H1 (cell line): ENCODE measurements at regions of chr2 and their contacts with region 1.

Region 1: GRCh38 chr2:110853507-110853906 is 121.1 kb downstream of the ACOXL start:
- DNase-seq: no peak
- H3K4me3 ChIP-seq: no peak overlapping the region
- H3K27ac ChIP-seq: no peak overlapping the region
- H3K4me1 ChIP-seq: peaks cover 2 to 13% (median 6%) of the 10 kb centered on the region in 4 experiments; a peak in 5 of 7 replicates
- H3K27me3 ChIP-seq: no peaks in the 10 kb centered on the region
- CTCF ChIP-seq: peak; percentile 55 to 81 (median 65)
- EP300 ChIP-seq: no peak
- POLR2A ChIP-seq: no peak
- RAD21 ChIP-seq: peak; percentile 26 to 47

Region 2: GRCh38 chr2:110788976-110789375 is 64.5 kb before region 1 on chr2:
- CTCF ChIA-PET with region 1: interaction called, 10 read pairs
- POLR2A ChIA-PET with region 1: interaction called, 3 read pairs
- DNase-seq: peak in 1 of 2 experiments; percentile 14
- H3K4me3 ChIP-seq: no peak overlapping the region
- H3K27ac ChIP-seq: no peak overlapping the region
- H3K4me1 ChIP-seq: no peaks in the 10 kb centered on the region
- H3K27me3 ChIP-seq: no peaks in the 10 kb centered on the region
- CTCF ChIP-seq: no peak
- EP300 ChIP-seq: no peak
- POLR2A ChIP-seq: no peak
- RAD21 ChIP-seq: no peak

Region 3: DNA sequence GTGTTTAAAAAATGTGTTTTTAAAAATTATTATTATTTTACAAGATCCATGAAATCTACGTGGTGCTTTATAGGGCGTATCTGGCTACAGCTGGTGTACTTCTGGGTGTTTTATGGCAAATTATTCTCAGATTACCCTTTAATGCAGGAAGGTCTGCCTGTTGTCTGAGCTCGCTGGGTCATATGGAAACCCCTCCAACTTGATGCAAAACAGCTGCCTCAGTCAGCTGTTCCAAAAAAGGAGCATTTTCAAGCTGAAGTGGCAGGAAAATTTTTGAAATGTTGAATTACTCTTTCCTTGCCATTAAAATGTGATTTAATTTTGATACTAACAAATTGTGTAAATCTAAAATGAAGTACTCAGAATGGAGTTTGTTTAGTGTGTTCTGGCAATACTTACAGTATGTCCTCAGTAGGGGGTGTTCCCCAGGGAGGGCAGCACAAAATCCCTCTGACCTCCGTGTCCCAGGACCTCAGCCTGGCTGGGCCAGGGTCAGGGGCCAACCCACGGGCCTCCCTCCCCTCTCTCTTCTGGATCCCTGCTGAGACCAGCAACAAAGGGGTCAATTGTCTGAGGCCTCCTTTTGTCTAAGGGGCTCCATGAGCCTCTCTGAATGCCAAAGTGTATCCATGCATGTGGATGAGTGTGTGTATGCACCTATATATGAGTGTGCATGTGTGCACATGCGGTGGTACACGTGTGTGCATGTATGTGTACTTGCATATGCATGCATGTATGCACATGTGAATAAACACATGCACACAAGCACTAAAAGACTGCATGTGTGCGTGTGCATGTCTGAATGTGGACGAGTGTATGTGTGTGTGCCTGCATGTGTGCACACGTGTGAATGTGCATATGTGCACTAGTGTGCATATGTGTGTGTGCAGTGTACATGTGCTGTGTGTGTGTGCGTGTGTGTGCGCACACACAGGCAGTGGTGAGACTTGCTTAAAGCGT is 15.8 kb before region 1 on chr2:
- CTCF ChIA-PET with region 1: interaction called, 58 read pairs
- POLR2A ChIA-PET with region 1: no interaction called
- DNase-seq: no peak
- H3K4me3 ChIP-seq: no peak overlapping the region
- H3K27ac ChIP-seq: 0 out of 2 replicates have a peak overlapping the region, but pooled peaks have one; percentile 45
- H3K4me1 ChIP-seq: peaks cover 16 to 51% (median 40%) of the 10 kb centered on the region in 4 experiments
- H3K27me3 ChIP-seq: no peaks in the 10 kb centered on the region
- CTCF ChIP-seq: no peak
- EP300 ChIP-seq: no peak
- POLR2A ChIP-seq: no peak
- RAD21 ChIP-seq: no peak

Region 4: GRCh38 chr2:110865188-110865587 is 11.7 kb after region 1 on chr2:
- CTCF ChIA-PET with region 1: interaction called, 35 read pairs
- POLR2A ChIA-PET with region 1: no interaction called
- DNase-seq: no peak
- H3K4me3 ChIP-seq: no peak overlapping the region
- H3K27ac ChIP-seq: no peak overlapping the region
- H3K4me1 ChIP-seq: peaks cover 0 to 11% (median 0%) of the 10 kb centered on the region in 4 experiments; a peak in 5 of 7 replicates
- H3K27me3 ChIP-seq: no peaks in the 10 kb centered on the region
- CTCF ChIP-seq: no peak
- EP300 ChIP-seq: no peak
- POLR2A ChIP-seq: no peak
- RAD21 ChIP-seq: no peak

Region 5: DNA sequence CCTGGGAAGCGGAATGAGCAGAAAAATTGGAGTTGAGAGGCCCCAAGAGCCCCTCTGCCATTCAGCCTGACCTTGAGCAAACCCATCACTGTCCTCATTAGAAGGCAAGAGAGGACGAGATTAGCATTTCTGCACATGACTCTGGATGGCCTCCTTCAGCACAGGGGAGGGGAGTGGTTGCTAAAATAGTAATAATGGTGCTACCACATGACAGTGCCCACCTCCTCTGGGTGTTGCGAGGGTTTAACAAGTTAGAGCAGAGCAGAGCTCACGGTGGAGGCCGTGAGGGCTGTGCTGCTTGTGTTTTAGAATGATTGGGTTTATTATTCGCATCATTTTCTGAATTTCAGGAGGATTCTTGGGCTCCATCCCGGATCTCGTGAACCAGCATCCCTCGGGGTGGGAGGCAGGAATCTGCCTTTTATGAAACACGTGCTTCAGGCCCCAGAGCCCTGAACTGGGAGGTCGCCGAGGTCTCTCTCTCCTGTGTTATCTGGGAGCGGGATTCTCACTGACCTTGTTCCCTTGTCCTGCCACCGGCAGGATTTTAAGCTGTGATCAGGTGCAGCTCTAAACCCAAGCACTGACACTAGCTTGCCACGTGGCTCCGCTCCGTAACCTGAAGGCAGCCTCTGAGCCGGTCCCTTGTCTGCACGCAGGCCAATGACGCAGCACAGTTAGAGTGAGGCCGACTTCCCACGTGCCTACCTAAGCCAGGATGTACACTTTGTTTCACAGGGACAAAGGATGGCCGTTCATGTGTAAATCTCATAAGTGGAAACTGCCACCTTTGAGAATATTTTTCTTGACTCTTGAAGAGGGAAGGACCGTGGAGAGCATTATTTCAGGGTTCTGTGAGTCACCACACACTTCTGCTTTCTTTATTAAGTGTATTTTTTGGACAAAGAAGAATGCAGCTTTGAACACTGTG is 21.2 kb after region 1 on chr2:
- CTCF ChIA-PET with region 1: interaction called, 51 read pairs
- POLR2A ChIA-PET with region 1: no interaction called
- DNase-seq: no peak
- H3K4me3 ChIP-seq: no peak overlapping the region
- H3K27ac ChIP-seq: no peak overlapping the region
- H3K4me1 ChIP-seq: peaks cover 0 to 12% (median 3%) of the 10 kb centered on the region in 4 experiments; a peak in 3 of 7 replicates
- H3K27me3 ChIP-seq: no peaks in the 10 kb centered on the region
- CTCF ChIP-seq: no peak
- EP300 ChIP-seq: no peak
- POLR2A ChIP-seq: no peak
- RAD21 ChIP-seq: no peak